Activated naive CD4-positive, alpha-beta T cell treated with anti-CD3 and anti-CD28 coated beads for 36 hours (primary cell): ENCODE measurements at regions of chr14 and their contacts with region 1.

Region 1: DNA sequence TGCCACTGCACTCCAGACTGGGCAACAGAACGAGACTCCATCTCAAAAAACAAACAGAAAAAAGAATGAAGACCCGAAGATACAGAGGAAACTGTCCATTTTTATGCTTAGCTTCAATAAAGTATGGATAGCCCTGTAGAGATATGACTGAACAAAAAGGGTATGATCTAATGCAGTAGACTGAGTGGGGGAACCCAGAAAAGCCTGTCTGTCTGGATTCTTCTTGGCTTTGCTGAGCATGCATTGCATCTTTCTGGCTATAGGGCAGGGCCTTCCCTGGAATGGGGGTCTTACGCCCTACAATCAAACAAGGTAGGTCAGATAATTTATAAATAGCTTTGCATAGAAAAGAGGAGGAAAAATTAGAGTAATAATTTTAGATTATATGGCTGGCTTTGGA is 10.1 kb downstream of the MIA2 start:
- DNase-seq: no peak
- H3K4me3 Mint-ChIP-seq: no peak overlapping the region
- H3K27ac Mint-ChIP-seq: no peak overlapping the region
- H3K4me1 Mint-ChIP-seq: no peaks in the 10 kb centered on the region
- H3K27me3 Mint-ChIP-seq: no peaks in the 10 kb centered on the region

Region 2: DNA sequence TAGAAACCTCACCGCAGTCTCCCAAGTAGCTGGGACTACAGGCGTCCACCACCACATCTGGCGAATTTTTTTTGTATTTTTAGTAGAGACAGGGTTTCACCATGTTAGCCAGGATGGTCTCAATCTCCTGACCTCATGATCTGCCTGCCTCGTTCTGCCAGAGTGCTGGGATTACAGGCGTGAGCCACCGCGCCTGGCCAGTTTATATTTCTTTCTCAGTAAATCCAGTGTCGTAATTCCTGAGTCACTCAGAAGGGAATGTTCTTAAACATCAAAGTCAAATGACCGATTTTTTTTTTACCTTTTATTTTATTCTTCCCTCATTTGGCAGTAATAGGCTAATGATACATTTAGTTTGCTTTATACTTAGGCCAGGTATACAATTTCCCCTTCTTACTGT is 107.9 kb after region 1 on chr14:
- CTCF ChIA-PET with region 1: no interaction called
- intact Hi-C with region 1: no loop called
- DNase-seq: no peak
- H3K4me3 Mint-ChIP-seq: no peak overlapping the region
- H3K27ac Mint-ChIP-seq: no peak overlapping the region
- H3K4me1 Mint-ChIP-seq: peaks cover 8% of the 10 kb centered on the region
- H3K27me3 Mint-ChIP-seq: no peaks in the 10 kb centered on the region

Region 3: DNA sequence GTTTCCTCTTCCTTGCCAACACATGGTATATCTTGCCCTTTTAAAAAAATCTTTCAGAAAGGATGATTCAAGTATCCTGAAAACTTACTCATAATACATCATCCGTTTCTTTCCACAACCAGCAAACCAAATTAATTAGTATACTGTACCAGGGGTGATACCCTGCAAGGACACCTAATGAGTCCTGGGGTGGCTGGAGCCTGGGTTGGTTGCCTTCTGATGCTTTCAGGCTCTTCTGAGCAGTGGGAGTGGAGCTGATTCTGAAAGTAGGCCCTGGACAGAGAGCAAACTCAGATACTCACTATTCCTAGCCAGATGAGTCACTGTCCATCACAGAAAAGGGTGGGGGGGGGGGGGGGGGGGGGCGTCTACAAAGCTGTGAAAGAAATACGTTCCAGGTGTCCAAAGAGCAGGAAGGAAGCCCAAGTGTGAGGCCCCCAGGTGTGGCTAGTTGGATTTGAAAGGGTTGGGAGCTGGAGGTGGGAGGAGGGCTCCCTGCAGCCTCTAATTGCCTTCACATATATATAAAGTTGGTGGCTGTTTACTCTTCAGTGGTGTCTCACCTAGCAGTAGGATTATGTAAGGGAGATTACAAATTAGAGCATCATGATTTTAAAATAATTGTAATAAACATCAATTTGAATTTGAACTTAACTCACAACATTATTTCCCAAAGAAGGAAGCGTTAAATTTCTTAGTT is 151.9 kb after region 1 on chr14:
- CTCF ChIA-PET with region 1: no interaction called
- intact Hi-C with region 1: no loop called
- DNase-seq: peak; percentile 26
- H3K4me3 Mint-ChIP-seq: no peak overlapping the region
- H3K27ac Mint-ChIP-seq: peak overlapping the region; percentile 81
- H3K4me1 Mint-ChIP-seq: peaks cover 19% of the 10 kb centered on the region
- H3K27me3 Mint-ChIP-seq: no peaks in the 10 kb centered on the region

Region 4: GRCh38 chr14:39419272-39419671 is 175.4 kb after region 1 on chr14:
- CTCF ChIA-PET with region 1: interaction called, 11 read pairs
- intact Hi-C with region 1: no loop called
- DNase-seq: no peak
- H3K4me3 Mint-ChIP-seq: no peak overlapping the region
- H3K27ac Mint-ChIP-seq: no peak overlapping the region
- H3K4me1 Mint-ChIP-seq: peaks cover 33% of the 10 kb centered on the region
- H3K27me3 Mint-ChIP-seq: no peaks in the 10 kb centered on the region